ENCODE measurements at regions of chr9 and their contacts with region 1.

Region 1: DNA sequence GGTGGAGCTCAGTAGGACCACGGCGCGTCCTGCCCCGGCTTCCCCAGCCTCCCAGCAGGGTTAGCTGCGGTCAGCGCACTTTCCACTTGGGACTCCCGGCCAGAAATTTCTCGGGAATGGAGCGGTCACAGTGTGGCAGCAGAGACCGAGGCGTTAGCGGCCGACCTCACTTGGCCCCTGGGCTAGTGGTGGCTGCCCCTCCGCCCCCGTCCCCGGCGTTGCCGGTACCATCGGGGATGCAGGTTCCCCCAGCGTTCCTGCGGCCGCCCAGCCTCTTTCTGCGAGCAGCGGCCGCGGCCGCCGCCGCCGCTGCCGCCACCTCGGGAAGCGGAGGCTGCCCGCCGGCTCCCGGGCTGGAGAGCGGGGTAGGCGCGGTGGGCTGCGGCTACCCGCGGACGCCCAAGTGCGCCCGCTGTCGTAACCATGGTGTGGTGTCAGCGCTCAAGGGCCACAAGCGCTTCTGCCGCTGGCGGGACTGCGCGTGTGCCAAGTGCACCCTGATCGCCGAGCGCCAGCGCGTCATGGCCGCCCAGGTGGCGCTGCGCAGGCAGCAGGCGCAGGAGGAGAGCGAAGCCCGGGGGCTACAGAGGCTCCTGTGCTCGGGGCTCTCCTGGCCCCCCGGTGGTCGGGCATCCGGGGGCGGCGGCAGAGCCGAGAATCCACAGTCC is 460 bp downstream of the DMRTA1 start:
- DNase-seq: peak; percentile 55 to 76
- H3K4me3 ChIP-seq: peak overlapping the region; percentile 54
- H3K4me1 ChIP-seq: 0 out of 2 replicates have a peak, but pooled peaks cover 3% of the 10 kb centered on the region
- H3K27me3 ChIP-seq: no peaks in the 10 kb centered on the region

Region 2: DNA sequence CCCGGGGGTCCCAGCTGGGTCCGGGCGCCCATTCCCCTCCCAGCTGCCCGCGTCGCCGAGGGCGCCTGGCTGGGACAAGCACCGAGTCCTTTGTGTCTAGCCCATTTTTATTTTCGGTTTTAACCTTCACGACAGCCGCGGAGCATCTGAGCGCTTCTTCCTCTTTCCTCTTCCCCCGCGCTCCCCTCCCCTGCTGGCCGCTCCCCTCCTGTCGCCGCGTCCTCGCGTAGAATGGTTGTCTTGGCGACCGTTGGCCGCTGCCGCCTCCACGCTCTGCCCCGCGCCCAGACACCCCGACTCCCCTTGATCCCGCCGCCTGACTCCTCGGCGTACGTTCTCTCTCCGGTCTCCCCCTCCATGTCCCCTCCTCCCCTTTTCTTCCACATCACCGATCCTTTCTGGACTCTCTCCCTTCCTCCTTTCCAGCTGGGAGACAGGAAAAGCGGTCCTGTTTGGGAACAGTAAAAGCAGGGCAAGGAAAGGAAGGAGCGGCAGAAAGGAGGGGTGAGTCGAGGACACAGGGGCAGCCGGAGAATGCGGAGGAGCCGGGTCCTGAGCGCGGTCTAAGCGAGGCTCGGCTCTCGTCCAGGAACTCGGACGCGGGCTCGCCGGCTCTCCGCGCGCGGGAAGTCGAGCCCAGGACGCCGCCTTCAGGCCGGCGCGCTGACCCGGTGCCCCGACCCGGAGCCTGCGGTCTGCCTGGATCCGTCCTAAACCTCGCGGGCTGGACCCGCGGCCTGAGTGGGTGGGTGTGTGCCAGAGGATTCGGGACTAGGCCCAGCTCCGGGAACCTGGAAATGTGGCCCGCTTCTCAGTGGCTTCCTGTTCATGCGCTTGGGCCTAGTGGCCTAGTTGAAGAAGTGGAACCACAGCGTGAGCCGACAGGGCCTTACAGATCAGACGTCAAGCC is 451.7 kb before region 1 on chr9:
- in situ Hi-C with region 1: loop called (anchors 25 kb)
- DNase-seq: peak; percentile 75 to 87
- H3K4me3 ChIP-seq: peak overlapping the region; percentile 82
- H3K4me1 ChIP-seq: peaks cover 22% of the 10 kb centered on the region
- H3K27me3 ChIP-seq: no peaks in the 10 kb centered on the region

Region 3: GRCh38 chr9:22244141-22245011 is 202.7 kb before region 1 on chr9:
- in situ Hi-C with region 1: no loop called
- DNase-seq: peak; percentile 53 to 73
- H3K4me3 ChIP-seq: no peak overlapping the region
- H3K4me1 ChIP-seq: peaks cover 13% of the 10 kb centered on the region
- H3K27me3 ChIP-seq: peaks cover 2% of the 10 kb centered on the region; the same call in 1 of the 2 replicates

Measured in HAP-1 (cell line).